Activated CD4-positive, alpha-beta memory T cell treated with anti-CD3 and anti-CD28 coated beads for 36 hours (primary cell): ENCODE measurements at regions of chr18 and their contacts with region 1.

Region 1: DNA sequence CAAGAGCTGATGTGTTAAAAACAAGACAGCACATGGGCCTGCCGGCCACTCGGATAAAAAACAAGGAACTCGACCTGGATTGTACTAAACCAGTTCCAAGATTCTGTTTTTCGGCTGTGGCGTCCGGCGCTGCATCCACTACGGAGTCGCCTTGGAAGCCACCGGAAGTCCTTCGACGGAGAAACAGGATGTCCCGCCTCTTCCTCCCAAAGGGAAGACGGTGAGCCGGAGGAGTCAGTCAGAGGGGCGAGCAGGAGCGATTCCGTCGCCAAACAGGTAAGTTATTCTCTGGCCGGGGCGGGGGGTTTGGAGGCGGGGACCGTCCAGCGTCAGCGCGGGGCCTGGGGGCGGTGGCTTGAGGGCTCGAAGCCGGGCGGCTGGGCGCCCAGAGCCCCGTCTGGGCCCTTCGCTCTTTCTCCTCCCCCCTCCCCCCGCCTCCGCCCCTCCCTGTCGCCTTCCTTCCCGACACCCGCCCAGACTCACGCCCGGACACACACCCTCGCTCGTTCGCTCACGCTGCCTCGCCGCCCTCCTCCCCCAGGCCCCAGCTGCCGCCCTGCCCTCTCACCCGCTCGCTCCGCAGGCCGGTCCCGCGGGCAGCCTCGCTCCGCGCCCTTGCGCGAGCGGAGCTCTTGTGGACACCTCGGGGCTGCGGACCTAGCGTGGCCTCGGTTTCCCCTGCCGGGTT is at the start of gene ZNF407:
- DNase-seq: peak; percentile 91
- H3K4me3 Mint-ChIP-seq: peak within 1 kb of the TSS; percentile 96
- H3K27ac Mint-ChIP-seq: peak within 1 kb of the TSS; percentile 99
- H3K4me1 Mint-ChIP-seq: peaks cover 41% of the 10 kb centered on the region
- H3K27me3 Mint-ChIP-seq: no peaks in the 10 kb centered on the region
- total RNA-seq, gene ZNF407: 10.0 to 10.5 TPM

Region 2: DNA sequence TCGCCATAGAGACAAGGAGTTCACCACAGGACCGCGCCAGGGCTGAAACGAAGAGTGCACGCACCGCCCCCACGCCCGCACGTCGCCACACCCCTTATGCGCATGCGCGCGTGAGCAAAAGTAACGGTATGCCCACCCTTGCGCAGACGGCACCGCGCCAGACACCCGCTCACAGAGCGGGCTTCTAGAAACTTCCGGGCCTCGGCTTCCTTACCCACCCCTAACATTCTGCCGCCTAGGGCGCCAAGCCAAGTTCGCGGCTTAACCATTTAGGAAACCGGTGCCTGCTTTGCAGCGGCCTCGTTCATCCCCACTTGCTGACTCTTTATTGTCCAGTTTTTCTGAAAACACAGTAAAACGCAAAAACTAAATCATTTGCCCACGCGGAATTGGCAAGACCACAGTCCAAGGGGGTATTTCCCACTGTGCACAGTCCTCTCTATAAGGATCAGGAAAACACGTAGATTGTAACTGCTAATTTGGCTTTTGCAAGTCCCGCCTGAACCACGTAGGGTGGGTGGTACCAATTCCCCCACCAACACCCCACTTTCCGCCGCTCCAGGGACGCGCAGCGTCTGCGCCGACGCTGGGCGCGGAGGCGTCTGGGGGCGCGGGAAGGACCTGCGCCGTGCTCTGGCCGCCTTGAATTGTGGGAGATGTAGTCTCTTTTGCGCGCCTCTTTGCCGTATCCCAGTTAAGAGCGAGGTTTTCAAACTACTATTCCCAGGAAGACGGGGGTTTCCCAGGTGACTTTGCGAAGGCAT is 449.8 kb before region 1 on chr18 and contains the starts of genes FBXO15 and TIMM21:
- CTCF ChIA-PET with region 1: no interaction called
- POLR2A ChIA-PET with region 1: no interaction called
- intact Hi-C with region 1: loop called (anchors 2 kb)
- DNase-seq: peak; percentile 97
- H3K4me3 Mint-ChIP-seq: peak within 1 kb of the TSS; percentile 95
- H3K27ac Mint-ChIP-seq: peak within 1 kb of the TSS; percentile 99
- H3K4me1 Mint-ChIP-seq: peaks cover 40% of the 10 kb centered on the region
- H3K27me3 Mint-ChIP-seq: peaks cover 2% of the 10 kb centered on the region
- total RNA-seq, gene FBXO15: 0.67 to 0.75 TPM
- total RNA-seq, gene TIMM21: 37.1 to 38.3 TPM

Region 3: GRCh38 chr18:74291771-74292540 is 305.9 kb before region 1 on chr18 and contains the start of gene CYB5A:
- CTCF ChIA-PET with region 1: no interaction called
- POLR2A ChIA-PET with region 1: no interaction called
- intact Hi-C with region 1: loop called (anchors 1 kb)
- DNase-seq: peak; percentile 98
- H3K4me3 Mint-ChIP-seq: peak within 1 kb of the TSS; percentile 88
- H3K27ac Mint-ChIP-seq: peak within 1 kb of the TSS; percentile 57
- H3K4me1 Mint-ChIP-seq: peaks cover 12% of the 10 kb centered on the region
- H3K27me3 Mint-ChIP-seq: no peaks in the 10 kb centered on the region
- total RNA-seq, gene CYB5A: 64.4 to 65.2 TPM

Region 4: GRCh38 chr18:74370115-74370514 is 227.7 kb before region 1 on chr18:
- CTCF ChIA-PET with region 1: no interaction called
- POLR2A ChIA-PET with region 1: no interaction called
- intact Hi-C with region 1: loop called (anchors 5 kb)
- DNase-seq: no peak
- H3K4me3 Mint-ChIP-seq: no peak overlapping the region
- H3K27ac Mint-ChIP-seq: no peak overlapping the region
- H3K4me1 Mint-ChIP-seq: peaks cover 31% of the 10 kb centered on the region
- H3K27me3 Mint-ChIP-seq: peaks cover 5% of the 10 kb centered on the region

Region 5: DNA sequence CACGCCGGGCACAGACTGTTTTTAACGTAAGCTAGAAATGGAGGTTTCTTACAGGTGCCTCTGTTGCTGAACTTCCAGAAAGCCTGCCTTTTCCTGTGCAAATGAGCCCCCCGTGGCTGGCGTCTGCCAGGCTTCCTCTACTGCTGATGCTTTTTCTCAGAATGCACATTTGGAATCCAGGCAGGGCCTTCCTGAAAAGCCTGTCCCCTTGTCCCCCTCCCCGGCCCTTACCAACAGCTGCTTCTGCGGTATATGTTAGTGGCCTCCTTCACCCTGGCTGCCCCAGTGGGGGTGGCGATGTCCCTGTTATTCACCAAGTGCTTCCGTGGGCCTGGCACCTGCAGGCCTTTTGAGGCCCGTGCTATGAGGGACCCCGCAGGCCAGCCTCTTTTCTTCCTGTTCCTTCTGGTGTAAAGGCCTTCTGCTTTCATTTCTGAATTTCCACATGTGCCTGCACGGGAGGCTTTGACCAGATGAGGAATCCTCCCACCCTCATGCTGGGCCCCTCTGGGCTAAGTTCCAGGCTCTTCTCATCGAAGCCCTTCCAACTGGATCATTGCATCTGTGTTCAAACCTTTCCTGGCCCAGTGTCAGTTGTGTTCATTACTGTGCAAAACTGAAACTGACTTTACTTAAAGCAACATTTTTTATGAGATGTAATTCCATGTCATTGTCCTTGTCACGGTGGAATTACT is 91.2 kb before region 1 on chr18:
- CTCF ChIA-PET with region 1: no interaction called
- POLR2A ChIA-PET with region 1: no interaction called
- intact Hi-C with region 1: no loop called
- DNase-seq: no peak
- H3K4me3 Mint-ChIP-seq: no peak overlapping the region
- H3K27ac Mint-ChIP-seq: no peak overlapping the region
- H3K4me1 Mint-ChIP-seq: peaks cover 3% of the 10 kb centered on the region
- H3K27me3 Mint-ChIP-seq: no peaks in the 10 kb centered on the region

Region 6: GRCh38 chr18:74551936-74552555 is 45.8 kb before region 1 on chr18:
- CTCF ChIA-PET with region 1: no interaction called
- POLR2A ChIA-PET with region 1: no interaction called
- intact Hi-C with region 1: no loop called
- DNase-seq: peak; percentile 86
- H3K4me3 Mint-ChIP-seq: no peak overlapping the region
- H3K27ac Mint-ChIP-seq: peak overlapping the region; percentile 51
- H3K4me1 Mint-ChIP-seq: no peaks in the 10 kb centered on the region
- H3K27me3 Mint-ChIP-seq: peaks cover 13% of the 10 kb centered on the region

Region 7: DNA sequence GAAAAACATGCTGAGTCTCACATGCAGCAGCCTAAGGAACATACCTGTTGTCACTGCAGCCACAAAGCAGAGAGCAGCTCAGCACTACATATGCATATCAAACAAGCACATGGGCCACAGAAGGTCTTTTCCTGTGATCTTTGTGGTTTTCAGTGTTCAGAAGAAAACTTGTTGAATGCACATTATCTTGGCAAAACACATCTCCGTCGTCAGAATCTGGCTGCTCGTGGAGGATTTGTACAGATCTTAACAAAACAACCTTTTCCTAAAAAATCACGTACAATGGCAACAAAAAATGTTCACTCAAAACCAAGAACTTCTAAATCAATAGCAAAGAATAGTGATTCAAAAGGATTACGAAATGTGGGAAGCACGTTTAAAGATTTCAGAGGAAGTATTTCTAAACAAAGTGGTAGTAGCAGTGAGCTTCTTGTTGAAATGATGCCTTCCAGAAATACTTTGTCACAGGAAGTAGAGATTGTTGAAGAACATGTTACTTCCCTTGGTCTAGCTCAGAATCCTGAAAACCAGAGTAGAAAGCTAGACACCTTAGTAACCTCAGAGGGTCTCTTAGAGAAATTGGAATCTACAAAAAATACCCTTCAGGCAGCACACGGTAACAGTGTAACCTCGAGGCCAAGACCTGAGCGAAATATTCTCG is 33.9 kb after region 1 on chr18:
- CTCF ChIA-PET with region 1: no interaction called
- POLR2A ChIA-PET with region 1: interaction called, 4 read pairs
- intact Hi-C with region 1: loop called (anchors 1 kb)
- DNase-seq: no peak
- H3K4me3 Mint-ChIP-seq: peak overlapping the region; percentile 40
- H3K27ac Mint-ChIP-seq: peak overlapping the region; percentile 83
- H3K4me1 Mint-ChIP-seq: peaks cover 46% of the 10 kb centered on the region
- H3K27me3 Mint-ChIP-seq: no peaks in the 10 kb centered on the region